Dendritic cell treated with granulocyte-macrophage colony-stimulating factor and Interleukin-4, amounts not matched to agents 40 ng/mL and 50 ng/mL, for 4 days (primary cell): ENCODE measurements at regions of chr3 and their contacts with region 1.

Region 1: DNA sequence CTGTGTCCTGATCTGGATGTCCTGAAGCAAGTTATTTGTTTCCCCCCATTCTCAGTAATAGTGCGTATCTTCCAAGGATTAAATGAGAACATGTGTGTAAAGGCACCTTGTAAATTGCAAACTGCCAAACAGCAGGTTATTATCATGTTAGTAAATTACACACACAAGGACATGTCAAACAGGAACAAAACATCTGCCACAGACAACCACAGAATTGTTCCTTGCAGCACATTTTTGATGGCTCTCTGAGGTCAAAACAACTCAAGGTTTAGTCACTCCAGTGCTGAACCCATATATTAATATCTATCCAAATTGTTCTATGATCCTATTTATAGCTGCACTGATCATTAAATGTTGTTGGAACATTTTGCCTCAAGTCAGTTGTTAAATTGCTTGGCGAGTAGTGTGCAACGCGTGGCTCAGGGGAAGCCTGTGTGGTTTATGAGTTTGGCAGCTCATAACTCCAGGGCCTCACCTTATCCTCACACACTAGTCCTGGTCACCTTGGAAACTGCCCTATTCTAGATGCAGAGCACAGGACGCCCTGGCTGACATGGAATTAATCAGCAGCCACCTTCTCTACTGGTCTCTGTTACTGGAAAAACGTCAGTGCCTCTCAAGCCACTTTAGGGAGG is 46.3 kb upstream of the CDV3 start:
- H3K4me3 Mint-ChIP-seq: no peak overlapping the region
- H3K27ac Mint-ChIP-seq: peak overlapping the region; percentile 18
- H3K4me1 Mint-ChIP-seq: peaks cover 22% of the 10 kb centered on the region
- H3K27me3 Mint-ChIP-seq: peaks cover 4% of the 10 kb centered on the region

Region 2: GRCh38 chr3:133384331-133385027 is 142.7 kb before region 1 on chr3:
- intact Hi-C with region 1: no loop called
- H3K4me3 Mint-ChIP-seq: no peak overlapping the region
- H3K27ac Mint-ChIP-seq: no peak overlapping the region
- H3K4me1 Mint-ChIP-seq: no peaks in the 10 kb centered on the region
- H3K27me3 Mint-ChIP-seq: no peaks in the 10 kb centered on the region

Region 3: GRCh38 chr3:133563186-133563591 is 36.0 kb after region 1 on chr3:
- intact Hi-C with region 1: loop called (anchors 5 kb)
- H3K4me3 Mint-ChIP-seq: no peak overlapping the region
- H3K27ac Mint-ChIP-seq: no peak overlapping the region
- H3K4me1 Mint-ChIP-seq: peaks cover 25% of the 10 kb centered on the region
- H3K27me3 Mint-ChIP-seq: no peaks in the 10 kb centered on the region